Heart right ventricle (tissue), 16 donors: ENCODE measurements at regions of chr17 and their contacts with region 1.

Region 1: GRCh38 chr17:77957857-77958715 is at the start of gene TNRC6C:
- DNase-seq: peak; percentile 100
- ATAC-seq: peak; percentile 98 to 100 (median 99)
- H3K4me3 ChIP-seq: peak within 1 kb of the TSS; percentile 66 to 99 (median 76)
- H3K27ac ChIP-seq: peak within 1 kb of the TSS; percentile 70 to 96 (median 86)
- H3K4me1 ChIP-seq: peaks cover 0 to 48% (median 35%) of the 10 kb centered on the region in 9 donors
- H3K27me3 ChIP-seq: peaks cover 0 to 40% (median 0%) of the 10 kb centered on the region in 7 donors
- CTCF ChIP-seq: peak in 4 of 9 donors; percentile 22 to 44 (median 30)
- total RNA-seq, gene TNRC6C: 17.1 to 31.4 (median 25.9) TPM

Region 2: GRCh38 chr17:77734341-77735080 is 223.6 kb before region 1 on chr17:
- intact Hi-C with region 1: loop called in 1 of 10 experiments (anchors 5 kb)
- DNase-seq: peak; percentile 94 to 95
- ATAC-seq: peak; percentile 72 to 91 (median 84)
- H3K4me3 ChIP-seq: peak overlapping the region in 6 of 10 donors; percentile 8 to 29 (median 18)
- H3K27ac ChIP-seq: peak overlapping the region; percentile 74 to 96 (median 86)
- H3K4me1 ChIP-seq: peaks cover 27 to 56% (median 46%) of the 10 kb centered on the region in 9 donors
- H3K27me3 ChIP-seq: peaks cover 0 to 9% (median 0%) of the 10 kb centered on the region in 7 donors
- CTCF ChIP-seq: peak in 6 of 9 donors; percentile 6 to 51 (median 28)

Region 3: DNA sequence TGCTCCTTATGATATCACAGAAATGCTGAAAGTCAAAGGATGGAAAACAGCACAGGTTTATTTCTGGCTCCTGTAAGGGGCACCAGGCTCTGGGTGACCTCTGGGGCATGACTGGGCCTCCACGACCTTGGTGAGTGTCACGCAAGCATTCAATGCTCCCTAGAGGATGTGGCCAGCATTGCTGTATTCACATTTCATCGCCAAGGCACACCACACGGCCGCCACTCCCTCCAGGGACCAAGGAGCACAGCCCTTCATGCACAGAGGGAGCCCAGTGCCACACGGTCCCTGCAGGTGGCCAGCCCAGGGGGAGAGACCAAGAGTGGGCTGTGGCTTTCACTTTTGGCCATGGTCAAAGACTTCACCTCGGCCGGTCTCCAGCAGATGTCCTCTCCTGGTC is 137.0 kb before region 1 on chr17:
- intact Hi-C with region 1: loop called in 1 of 10 experiments (anchors 5 kb)
- DNase-seq: peak; percentile 33 to 37
- ATAC-seq: peak in 7 of 8 donors; percentile 41 to 79 (median 66)
- H3K4me3 ChIP-seq: no peak overlapping the region
- H3K27ac ChIP-seq: peak overlapping the region in 3 of 10 donors; percentile 27 to 35 (median 30)
- H3K4me1 ChIP-seq: peaks cover 4 to 39% (median 11%) of the 10 kb centered on the region in 9 donors
- H3K27me3 ChIP-seq: no peaks in the 10 kb centered on the region
- CTCF ChIP-seq: peak in 7 of 9 donors; percentile 19 to 44 (median 22)

Region 4: GRCh38 chr17:77842528-77843147 is 115.4 kb before region 1 on chr17:
- intact Hi-C with region 1: loop called in 1 of 10 experiments (anchors 10 kb)
- DNase-seq: no peak
- ATAC-seq: no peak
- H3K4me3 ChIP-seq: no peak overlapping the region
- H3K27ac ChIP-seq: peak overlapping the region in 9 of 10 donors; percentile 35 to 88 (median 68)
- H3K4me1 ChIP-seq: peaks cover 4 to 56% (median 40%) of the 10 kb centered on the region in 9 donors
- H3K27me3 ChIP-seq: no peaks in the 10 kb centered on the region
- CTCF ChIP-seq: no peak

Region 5: GRCh38 chr17:77887464-77888241 is 70.4 kb before region 1 on chr17:
- intact Hi-C with region 1: loop called in 4 of 10 experiments (anchors 2 to 5 kb)
- DNase-seq: peak; percentile 84
- ATAC-seq: peak; percentile 80 to 93 (median 87)
- H3K4me3 ChIP-seq: peak overlapping the region; percentile 14 to 65 (median 50)
- H3K27ac ChIP-seq: peak overlapping the region in 9 of 10 donors; percentile 47 to 90 (median 69)
- H3K4me1 ChIP-seq: peaks cover 6 to 42% (median 14%) of the 10 kb centered on the region in 9 donors
- H3K27me3 ChIP-seq: peaks cover 0 to 11% (median 0%) of the 10 kb centered on the region in 7 donors
- CTCF ChIP-seq: no peak

Region 6: GRCh38 chr17:78013683-78014467 is 55.8 kb after region 1 on chr17:
- intact Hi-C with region 1: loop called in 4 of 10 experiments (anchors 1 to 10 kb)
- DNase-seq: peak in 1 of 2 donors; percentile 43
- ATAC-seq: peak; percentile 44 to 78 (median 70)
- H3K4me3 ChIP-seq: no peak overlapping the region
- H3K27ac ChIP-seq: no peak overlapping the region
- H3K4me1 ChIP-seq: peaks cover 0 to 18% (median 10%) of the 10 kb centered on the region in 9 donors
- H3K27me3 ChIP-seq: no peaks in the 10 kb centered on the region
- CTCF ChIP-seq: peak; percentile 45 to 89 (median 77)

Region 7: GRCh38 chr17:78197147-78197832 is 239.2 kb after region 1 on chr17:
- intact Hi-C with region 1: no loop called
- DNase-seq: no peak
- ATAC-seq: no peak
- H3K4me3 ChIP-seq: no peak overlapping the region
- H3K27ac ChIP-seq: peak overlapping the region in 2 of 10 donors; percentile 10 to 88
- H3K4me1 ChIP-seq: peaks cover 0 to 7% (median 0%) of the 10 kb centered on the region in 9 donors
- H3K27me3 ChIP-seq: no peaks in the 10 kb centered on the region
- CTCF ChIP-seq: no peak

Region 8: GRCh38 chr17:78214706-78215061 is 256.6 kb after region 1 on chr17:
- intact Hi-C with region 1: no loop called
- DNase-seq: no peak
- ATAC-seq: no peak
- H3K4me3 ChIP-seq: peak overlapping the region in 6 of 10 donors; percentile 41 to 65 (median 53)
- H3K27ac ChIP-seq: peak overlapping the region in 1 of 10 donors; percentile 61
- H3K4me1 ChIP-seq: peaks cover 0 to 22% (median 8%) of the 10 kb centered on the region in 9 donors
- H3K27me3 ChIP-seq: no peaks in the 10 kb centered on the region
- CTCF ChIP-seq: no peak